Activated T-helper 1 cell treated with anti-CD3 and anti-CD28 coated beads, Interleukin-12 subunit alpha, Interleukin-12 subunit beta, Interleukin-2, Interleukin-4 antibody, amounts not matched to agents 30 ng/mL and 10 ng/mL and 1 ng/mL, durations not matched to agents 14 hours and 24 hours and 36 hours (primary cell): ENCODE measurements at regions of chr11 and their contacts with region 1.

Region 1: DNA sequence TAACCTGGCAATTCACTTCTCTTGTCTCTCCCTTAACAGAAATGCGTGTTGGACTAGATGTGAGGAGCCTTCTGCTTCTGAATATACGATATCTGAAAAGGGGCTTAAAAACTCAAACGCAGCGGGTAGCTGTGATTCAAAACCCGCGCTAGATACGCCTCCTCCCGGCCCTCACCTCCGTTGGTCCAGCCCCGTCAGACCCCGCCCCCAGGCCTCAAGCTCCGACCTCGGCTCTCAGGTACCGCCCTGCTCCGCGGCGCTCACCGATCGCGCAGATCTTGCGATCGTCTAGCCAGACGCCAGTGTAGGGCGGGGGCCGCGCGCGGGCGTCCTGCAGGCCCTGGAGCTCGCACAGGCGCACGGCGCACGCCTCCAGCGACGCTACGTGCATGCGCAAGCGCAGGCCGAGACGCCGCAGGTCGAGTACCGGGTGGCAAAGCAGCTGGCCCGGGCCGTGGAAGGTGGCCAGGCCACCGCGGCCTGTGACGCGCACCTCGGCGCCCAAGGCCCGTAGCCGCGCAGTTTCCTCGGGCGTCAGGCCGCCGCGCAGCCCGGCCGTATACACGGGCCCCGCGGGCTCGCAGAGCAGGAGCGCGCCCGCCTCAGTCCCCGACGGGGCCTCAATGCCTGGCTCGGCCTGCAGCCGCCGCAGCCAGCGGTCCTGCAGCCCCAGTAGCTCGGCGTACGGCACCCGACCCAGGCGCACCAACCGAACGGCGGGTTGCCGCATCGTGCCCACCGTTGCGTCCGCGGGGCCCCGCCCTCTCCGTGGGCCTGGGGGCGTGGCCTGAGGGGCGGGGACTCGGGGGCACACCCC is at the start of gene LIPT2:
- DNase-seq: peak; percentile 96
- H3K4me3 Mint-ChIP-seq: peak within 1 kb of the TSS; percentile 86
- H3K27ac Mint-ChIP-seq: peak within 1 kb of the TSS; percentile 83
- H3K4me1 Mint-ChIP-seq: peaks cover 21% of the 10 kb centered on the region
- H3K27me3 Mint-ChIP-seq: peaks cover 8% of the 10 kb centered on the region
- total RNA-seq, gene LIPT2: 2.7 and 3.4 TPM in 2 replicates

Region 2: DNA sequence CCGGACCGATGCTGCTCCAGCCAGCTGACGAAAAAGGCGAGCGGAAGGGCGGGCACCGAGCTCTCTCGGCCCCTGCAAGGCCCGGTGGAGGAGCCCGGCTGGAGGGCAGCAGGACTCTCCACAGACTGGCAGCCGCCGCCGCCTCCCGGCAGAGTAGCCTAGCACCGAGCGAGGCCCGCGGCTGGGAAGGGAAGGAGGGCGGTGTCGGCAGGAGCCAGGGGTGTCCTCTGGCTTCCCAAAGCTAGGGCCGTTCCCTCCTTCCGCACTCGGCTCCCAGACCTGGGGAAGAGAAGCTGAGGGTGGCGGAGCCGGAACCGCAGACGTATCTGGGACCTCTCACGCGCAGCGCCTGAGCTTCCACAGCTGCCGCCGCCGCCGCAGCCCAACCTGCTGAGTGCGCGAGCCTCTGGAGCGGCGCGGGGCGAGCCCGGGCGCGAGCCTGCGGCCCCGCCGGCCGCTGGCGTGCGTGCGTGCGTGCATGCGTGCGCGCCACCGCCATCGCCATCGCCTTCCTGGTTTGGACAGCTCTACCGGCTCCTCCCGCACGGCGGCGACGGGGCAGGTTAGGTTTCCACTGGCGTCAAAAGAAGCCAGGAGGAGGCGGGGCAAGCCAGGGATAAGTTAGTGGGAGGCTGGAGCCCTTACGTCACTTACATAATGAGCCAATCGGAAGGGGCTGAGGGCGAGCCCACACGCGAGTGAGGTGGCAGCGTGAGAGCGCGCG is 732.3 kb before region 1 on chr11 and contains the start of gene RAB6A:
- intact Hi-C with region 1: loop called (anchors 1 kb)
- DNase-seq: peak; percentile 100
- H3K4me3 Mint-ChIP-seq: peak within 1 kb of the TSS; percentile 98
- H3K27ac Mint-ChIP-seq: peak within 1 kb of the TSS; percentile 97
- H3K4me1 Mint-ChIP-seq: peaks cover 41% of the 10 kb centered on the region
- H3K27me3 Mint-ChIP-seq: peaks cover 3% of the 10 kb centered on the region
- total RNA-seq, gene RAB6A: 81.9 and 88.0 TPM in 2 replicates

Region 3: GRCh38 chr11:73779084-73779902 is 713.9 kb before region 1 on chr11:
- intact Hi-C with region 1: loop called (anchors 5 kb)
- DNase-seq: peak; percentile 97
- H3K4me3 Mint-ChIP-seq: peak overlapping the region; percentile 90
- H3K27ac Mint-ChIP-seq: peak overlapping the region; percentile 99
- H3K4me1 Mint-ChIP-seq: peaks cover 10% of the 10 kb centered on the region
- H3K27me3 Mint-ChIP-seq: no peaks in the 10 kb centered on the region

Region 4: GRCh38 chr11:74929431-74930363 is 436.5 kb after region 1 on chr11:
- intact Hi-C with region 1: no loop called
- DNase-seq: peak; percentile 49
- H3K4me3 Mint-ChIP-seq: no peak overlapping the region
- H3K27ac Mint-ChIP-seq: no peak overlapping the region
- H3K4me1 Mint-ChIP-seq: peaks cover 42% of the 10 kb centered on the region
- H3K27me3 Mint-ChIP-seq: no peaks in the 10 kb centered on the region